Mucosa of descending colon (tissue), 3 donors: ENCODE measurements at regions of chr11 and their contacts with region 1.

Region 1: DNA sequence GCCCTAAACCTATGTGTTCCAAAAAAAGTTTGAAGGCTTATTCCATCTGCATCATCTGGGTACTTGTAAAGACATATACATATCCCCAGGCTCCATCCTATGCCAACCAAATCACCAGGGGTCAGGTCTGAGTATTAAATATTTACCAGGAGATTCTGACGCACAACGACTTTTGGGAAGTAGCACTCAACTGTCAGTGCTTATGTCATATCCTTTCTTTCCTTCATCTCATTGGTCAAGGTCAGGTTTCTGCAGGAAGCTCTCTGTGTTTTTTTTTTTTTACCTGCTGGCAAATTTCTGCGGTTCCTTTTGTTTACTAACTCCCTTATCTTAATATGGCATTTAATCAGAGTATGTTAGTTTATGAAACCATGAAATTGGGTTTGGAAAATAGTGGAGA is 22.5 kb upstream of the CYP2R1 start:
- DNase-seq: no peak
- ATAC-seq: no peak
- H3K4me3 ChIP-seq: no peak overlapping the region
- H3K4me1 ChIP-seq: no peaks in the 10 kb centered on the region
- CTCF ChIP-seq: no peak

Region 2: GRCh38 chr11:14443638-14444037 is 470.9 kb before region 1 on chr11:
- intact Hi-C with region 1: no loop called
- DNase-seq: peak in 1 of 3 donors; percentile 59
- ATAC-seq: peak; percentile 59
- H3K4me3 ChIP-seq: no peak overlapping the region
- H3K4me1 ChIP-seq: no peaks in the 10 kb centered on the region
- CTCF ChIP-seq: no peak

Region 3: DNA sequence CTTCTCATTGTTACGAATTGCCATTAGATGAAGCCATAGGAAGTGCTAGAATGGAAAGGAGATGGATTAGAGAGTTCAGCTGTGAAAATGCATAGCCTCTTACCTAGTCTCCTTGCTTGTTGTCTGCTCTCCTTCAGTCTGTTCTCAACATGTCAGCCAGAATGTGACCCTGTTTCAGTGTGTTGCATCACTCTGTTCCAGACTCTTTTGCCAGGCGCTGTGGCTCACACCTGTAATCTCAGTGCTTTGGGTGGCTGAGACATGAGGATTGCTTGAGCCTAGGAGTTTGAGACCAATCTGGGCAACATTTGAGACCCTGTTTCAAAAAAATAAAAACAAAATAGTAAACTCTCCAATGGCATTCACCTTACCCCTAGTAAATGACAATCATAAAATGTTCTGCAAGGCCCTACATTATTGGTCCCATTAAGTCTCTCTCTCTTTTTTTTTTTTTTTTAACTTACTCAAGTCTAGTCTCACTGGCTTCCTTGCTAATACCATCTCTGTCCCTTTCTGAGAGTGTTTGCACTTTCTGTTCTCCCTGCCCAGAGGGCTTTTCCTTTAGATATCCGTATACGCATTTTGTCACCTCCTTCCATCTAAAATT is 61.9 kb before region 1 on chr11:
- intact Hi-C with region 1: no loop called
- DNase-seq: no peak
- ATAC-seq: no peak
- H3K4me3 ChIP-seq: no peak overlapping the region
- H3K4me1 ChIP-seq: no peaks in the 10 kb centered on the region
- CTCF ChIP-seq: no peak

Region 4: DNA sequence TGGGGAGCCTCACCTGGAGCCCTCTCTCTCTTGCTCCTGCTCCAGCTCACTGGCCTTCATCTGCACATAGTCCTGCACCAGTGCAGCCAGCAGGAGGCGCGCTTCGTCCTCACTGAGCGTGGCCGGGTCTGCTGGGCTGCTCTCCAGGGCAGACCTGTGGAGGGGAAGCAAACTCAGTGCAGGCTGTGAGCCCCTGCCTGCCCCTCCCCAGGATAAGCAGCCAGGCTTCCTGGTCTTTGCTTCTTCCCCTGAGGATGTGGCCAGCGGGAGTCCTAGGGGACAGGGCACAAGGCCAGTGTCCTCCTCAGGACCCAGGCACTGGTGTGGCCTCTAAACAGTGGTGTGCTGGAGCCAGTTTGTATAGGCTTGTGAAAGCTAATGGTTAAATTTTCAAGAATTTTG is 55.4 kb after region 1 on chr11:
- intact Hi-C with region 1: no loop called
- DNase-seq: peak in 2 of 3 donors; percentile 62 to 64
- ATAC-seq: peak; percentile 63
- H3K4me3 ChIP-seq: no peak overlapping the region
- H3K4me1 ChIP-seq: peaks cover 13% of the 10 kb centered on the region
- CTCF ChIP-seq: peak; percentile 21

Region 5: GRCh38 chr11:15062599-15062998 is 148.1 kb after region 1 on chr11:
- intact Hi-C with region 1: loop called in 1 of 2 experiments (anchors 10 kb)
- DNase-seq: no peak
- ATAC-seq: no peak
- H3K4me3 ChIP-seq: no peak overlapping the region
- H3K4me1 ChIP-seq: no peaks in the 10 kb centered on the region
- CTCF ChIP-seq: no peak